ENCODE measurements at regions of chr2 and their contacts with region 1.

Region 1: GRCh38 chr2:226835796-226836547 is at the start of gene RHBDD1:
- DNase-seq: peak; percentile 96
- H3K4me3 ChIP-seq: peak within 1 kb of the TSS; percentile 73
- H3K27ac ChIP-seq: peak within 1 kb of the TSS; percentile 97
- H3K4me1 ChIP-seq: peaks cover 53% of the 10 kb centered on the region
- CTCF ChIP-seq: no peak
- total RNA-seq, gene RHBDD1: 30.4 and 40.8 TPM in 2 replicates

Region 2: GRCh38 chr2:226497146-226497909 is 338.6 kb before region 1 on chr2:
- CTCF ChIA-PET with region 1: no interaction called
- POLR2A ChIA-PET with region 1: no interaction called
- intact Hi-C with region 1: no loop called
- DNase-seq: no peak
- H3K4me3 ChIP-seq: no peak overlapping the region
- H3K27ac ChIP-seq: no peak overlapping the region
- H3K4me1 ChIP-seq: no peaks in the 10 kb centered on the region
- CTCF ChIP-seq: no peak

Region 3: GRCh38 chr2:226875438-226876225 is 39.7 kb after region 1 on chr2:
- CTCF ChIA-PET with region 1: no interaction called
- POLR2A ChIA-PET with region 1: interaction called, 26 read pairs
- intact Hi-C with region 1: no loop called
- DNase-seq: no peak
- H3K4me3 ChIP-seq: no peak overlapping the region
- H3K27ac ChIP-seq: no peak overlapping the region
- H3K4me1 ChIP-seq: peaks cover 16% of the 10 kb centered on the region
- CTCF ChIP-seq: 0 out of 2 replicates have a peak, but pooled peaks have one; percentile 25

Region 4: DNA sequence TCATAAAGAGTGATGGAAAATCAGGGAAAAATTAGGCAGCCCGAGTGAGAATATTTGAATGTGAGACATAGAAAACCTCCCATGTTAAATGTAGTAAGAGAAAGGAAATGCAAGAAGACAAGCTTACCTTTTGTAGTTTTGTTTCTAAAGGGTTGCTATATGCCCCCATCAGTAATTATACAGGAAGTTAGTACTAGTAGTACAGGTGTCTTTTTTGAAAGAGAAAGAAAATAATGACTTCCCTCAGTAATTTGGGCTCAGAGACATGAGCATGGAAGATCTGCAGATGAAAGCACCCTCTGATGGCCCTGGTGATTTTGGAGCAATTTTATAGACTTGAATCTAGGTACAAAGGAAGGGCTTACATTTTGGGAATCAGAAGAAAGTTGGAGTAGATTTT is 80.7 kb after region 1 on chr2:
- CTCF ChIA-PET with region 1: interaction called, 3 read pairs
- POLR2A ChIA-PET with region 1: interaction called, 34 read pairs
- intact Hi-C with region 1: loop called (anchors 2 kb)
- DNase-seq: peak; percentile 79
- H3K4me3 ChIP-seq: peak overlapping the region; percentile 12
- H3K27ac ChIP-seq: peak overlapping the region; percentile 75
- H3K4me1 ChIP-seq: peaks cover 59% of the 10 kb centered on the region
- CTCF ChIP-seq: peak; percentile 21; the same call in 1 of the 2 replicates

Region 5: DNA sequence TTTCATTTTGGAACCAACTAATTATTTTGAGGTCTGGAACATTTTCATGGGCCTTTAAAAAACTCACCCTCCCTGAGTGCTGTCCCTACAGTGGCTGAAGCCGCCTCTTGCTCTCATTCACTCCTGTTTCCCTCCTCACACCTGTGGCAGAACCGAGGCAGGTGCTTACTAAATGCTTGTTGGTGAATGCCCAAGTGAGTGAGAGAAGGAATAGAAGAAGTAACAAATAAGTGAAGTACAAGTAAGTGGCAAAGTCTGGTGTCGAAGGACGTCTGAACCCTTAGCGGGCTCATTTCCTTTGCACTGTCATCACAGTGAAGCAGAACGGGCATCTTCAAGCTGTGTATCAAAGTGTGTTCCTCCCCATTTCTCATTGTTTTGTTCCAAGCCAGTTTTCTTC is 135.1 kb after region 1 on chr2:
- CTCF ChIA-PET with region 1: no interaction called
- POLR2A ChIA-PET with region 1: interaction called, 6 read pairs
- intact Hi-C with region 1: loop called (anchors 1 kb)
- DNase-seq: peak; percentile 77
- H3K4me3 ChIP-seq: peak overlapping the region; percentile 57
- H3K27ac ChIP-seq: peak overlapping the region; percentile 99
- H3K4me1 ChIP-seq: peaks cover 77% of the 10 kb centered on the region
- CTCF ChIP-seq: no peak

Region 6: DNA sequence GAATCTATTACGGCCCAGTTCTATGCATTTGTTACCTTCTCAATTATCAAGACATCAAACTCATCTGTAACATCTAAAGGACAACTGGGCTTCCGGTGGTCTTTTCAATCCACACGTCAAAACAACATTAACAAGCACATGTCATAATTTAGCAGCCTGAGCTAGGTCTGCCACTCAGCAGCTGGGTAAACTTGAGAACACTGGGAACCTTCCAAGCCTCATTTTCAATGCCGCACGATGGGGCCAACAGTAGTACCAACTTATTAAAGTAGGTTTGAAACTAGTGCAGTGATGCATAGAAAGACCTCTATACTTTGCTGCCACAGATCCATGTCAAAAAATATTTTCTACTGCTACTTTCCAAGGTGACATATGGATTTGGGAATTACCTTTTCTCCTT is 267.6 kb after region 1 on chr2:
- CTCF ChIA-PET with region 1: no interaction called
- POLR2A ChIA-PET with region 1: no interaction called
- intact Hi-C with region 1: no loop called
- DNase-seq: no peak
- H3K4me3 ChIP-seq: no peak overlapping the region
- H3K27ac ChIP-seq: no peak overlapping the region
- H3K4me1 ChIP-seq: no peaks in the 10 kb centered on the region
- CTCF ChIP-seq: no peak